ENCODE measurements at regions of chr5 and their contacts with region 1.

Region 1: DNA sequence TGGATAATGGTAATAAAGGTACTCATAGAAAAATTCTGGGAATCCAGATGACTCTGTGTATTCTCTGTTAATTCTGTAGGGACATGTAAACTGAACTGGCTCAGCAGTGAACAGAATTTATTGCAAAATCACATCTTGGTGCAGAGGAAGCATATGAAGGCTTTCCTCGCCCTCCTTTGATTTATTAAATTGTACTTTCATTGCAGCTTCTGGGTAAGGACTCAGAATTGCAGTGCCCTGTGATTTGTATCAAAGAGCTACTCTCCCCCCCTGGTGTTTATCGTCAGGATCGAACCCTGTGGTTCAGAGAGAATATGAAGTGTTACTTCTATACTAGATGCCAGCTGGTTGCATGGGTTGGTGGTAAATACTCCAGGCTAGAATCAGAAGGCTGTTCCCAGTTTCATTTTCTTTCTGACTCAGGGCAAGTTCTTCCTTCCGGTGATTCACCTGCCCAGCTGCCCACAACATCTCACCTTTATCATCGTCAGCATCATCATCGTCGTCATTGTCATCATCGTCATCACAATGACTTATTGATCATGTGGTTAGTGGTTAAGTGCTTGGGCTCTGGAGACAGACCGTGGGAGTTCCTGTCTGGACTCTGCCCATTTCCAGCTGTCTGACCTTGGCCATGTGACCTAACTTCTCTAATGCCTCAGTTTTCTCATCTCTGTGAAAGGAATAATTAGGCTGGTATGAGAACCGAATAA is 238.8 kb downstream of the ARHGAP26 start:
- DNase-seq: peak in 2 of 5 donors; percentile 26 to 39
- ATAC-seq: peak in 3 of 4 donors; percentile 29 to 53 (median 42)
- H3K4me3 ChIP-seq: no peak overlapping the region
- H3K27ac ChIP-seq: peak overlapping the region in 5 of 12 donors; percentile 13 to 64 (median 35)
- H3K4me1 ChIP-seq: peaks cover 0 to 67% (median 37%) of the 10 kb centered on the region in 12 donors
- H3K27me3 ChIP-seq: no peaks in the 10 kb centered on the region
- CTCF ChIP-seq: no peak
- POLR2A ChIP-seq: no peak

Region 2: DNA sequence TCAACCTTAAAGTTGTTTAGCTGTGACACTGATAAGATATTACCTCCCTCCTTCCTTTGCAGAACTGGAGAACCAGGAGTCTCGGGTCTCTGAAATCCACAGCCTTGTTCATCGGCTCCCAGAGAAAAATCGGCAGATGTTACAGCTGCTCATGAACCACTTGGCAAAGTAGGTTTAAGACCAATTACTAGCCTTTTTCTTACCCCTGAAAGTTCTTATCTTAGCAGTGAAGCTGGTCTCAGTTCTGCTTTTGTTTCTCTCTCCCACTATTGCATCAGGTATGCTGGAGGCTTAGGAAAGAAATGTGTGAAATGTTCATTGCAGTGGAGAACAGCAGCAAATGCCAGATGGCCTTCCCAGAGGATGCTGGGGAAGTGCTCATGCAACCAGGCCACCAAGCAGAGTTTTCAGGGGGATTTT is 48.6 kb after region 1 on chr5:
- intact Hi-C with region 1: loop called in 2 of 10 experiments (anchors 1 to 10 kb)
- DNase-seq: no peak
- ATAC-seq: no peak
- H3K4me3 ChIP-seq: no peak overlapping the region
- H3K27ac ChIP-seq: peak overlapping the region in 5 of 12 donors; percentile 22 to 65 (median 46)
- H3K4me1 ChIP-seq: peaks cover 0 to 63% (median 36%) of the 10 kb centered on the region in 12 donors
- H3K27me3 ChIP-seq: no peaks in the 10 kb centered on the region
- CTCF ChIP-seq: no peak
- POLR2A ChIP-seq: no peak

Region 3: GRCh38 chr5:143200781-143201398 is 191.9 kb after region 1 on chr5:
- intact Hi-C with region 1: loop called in 2 of 10 experiments (anchors 5 to 10 kb)
- DNase-seq: peak in 4 of 5 donors; percentile 56 to 73 (median 68)
- ATAC-seq: peak; percentile 96 to 99 (median 98)
- H3K4me3 ChIP-seq: no peak overlapping the region
- H3K27ac ChIP-seq: peak overlapping the region in 7 of 12 donors; percentile 19 to 58 (median 45)
- H3K4me1 ChIP-seq: peaks cover 0 to 61% (median 33%) of the 10 kb centered on the region in 12 donors
- H3K27me3 ChIP-seq: no peaks in the 10 kb centered on the region
- CTCF ChIP-seq: no peak
- POLR2A ChIP-seq: no peak

Measured in heart left ventricle (tissue), 16 donors.